Activated CD4-positive, alpha-beta memory T cell treated with anti-CD3 and anti-CD28 coated beads for 36 hours (primary cell): ENCODE measurements at regions of chr1 and their contacts with region 1.

Region 1: DNA sequence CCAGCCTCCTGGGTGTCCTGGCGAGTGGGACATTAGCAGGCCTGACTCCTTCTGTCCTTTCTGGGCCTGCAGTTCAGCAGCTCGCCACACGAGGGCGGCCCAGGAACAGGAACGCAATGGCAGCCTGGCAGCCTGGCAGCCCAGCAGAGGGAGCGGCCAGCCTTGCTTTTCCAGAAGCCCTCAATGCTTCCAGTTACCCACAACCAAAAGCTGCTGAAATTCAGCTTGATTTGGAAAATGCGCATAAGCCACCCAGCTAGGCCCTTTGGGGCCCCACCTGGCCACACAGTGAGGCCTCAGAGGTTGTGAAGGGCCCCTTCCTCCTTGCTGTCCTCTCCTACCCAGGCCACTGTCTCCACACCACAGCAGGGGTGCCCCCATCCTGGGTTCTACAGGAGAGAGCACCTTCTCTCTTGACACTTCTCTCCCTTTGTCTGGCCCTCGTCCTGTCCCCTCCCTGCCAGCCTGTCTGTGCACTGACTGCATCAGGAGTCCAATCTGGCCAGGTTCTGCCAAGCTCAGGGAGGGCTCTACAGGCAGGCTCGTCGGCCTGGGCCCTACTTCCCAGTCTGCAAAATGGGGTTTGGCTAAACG is 103.4 kb upstream of the VAMP3 start:
- DNase-seq: peak; percentile 87
- H3K4me3 Mint-ChIP-seq: no peak overlapping the region
- H3K27ac Mint-ChIP-seq: no peak overlapping the region
- H3K4me1 Mint-ChIP-seq: no peaks in the 10 kb centered on the region
- H3K27me3 Mint-ChIP-seq: peaks cover 5% of the 10 kb centered on the region

Region 2: DNA sequence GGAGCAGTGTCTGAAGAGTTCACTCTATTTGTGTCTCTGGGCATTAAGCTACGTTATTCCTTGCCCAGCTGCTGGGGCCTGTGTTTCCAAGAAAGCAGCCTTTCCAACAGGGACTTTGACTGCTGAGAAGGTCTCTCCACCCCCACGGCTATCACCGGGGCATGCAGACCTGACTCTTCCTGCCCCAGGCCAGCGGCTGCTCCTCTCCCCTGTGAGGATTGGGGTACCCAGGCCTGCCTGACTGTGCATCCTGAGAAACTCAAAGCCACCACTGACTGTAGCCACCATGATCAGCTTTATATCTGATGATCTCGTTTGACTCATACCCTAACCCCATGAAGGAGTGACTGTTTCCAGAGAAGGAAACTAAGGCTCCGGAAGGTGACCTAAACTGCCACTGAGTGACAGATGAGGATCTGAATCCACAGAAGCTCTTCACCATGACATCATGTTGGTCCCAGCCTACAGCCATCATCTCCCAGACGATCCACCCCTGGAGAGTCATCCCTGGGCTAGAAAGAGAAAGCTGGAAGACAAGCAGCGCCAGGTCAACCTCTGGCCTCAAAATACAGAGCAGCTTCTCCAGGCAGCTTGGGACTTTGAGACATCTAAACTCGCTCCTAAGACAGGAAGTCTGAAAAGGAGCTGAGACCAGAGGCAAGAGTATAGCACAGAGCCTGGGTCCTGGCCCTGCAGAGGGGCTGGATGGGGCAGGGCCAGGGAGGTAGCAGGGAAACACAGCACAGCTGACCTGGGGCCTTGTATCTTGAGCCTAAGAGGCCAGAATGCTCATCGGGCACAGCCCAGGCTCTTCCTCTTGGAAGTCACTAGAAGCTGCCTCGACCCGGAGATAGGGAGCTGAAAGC is 140.6 kb before region 1 on chr1:
- CTCF ChIA-PET with region 1: no interaction called
- POLR2A ChIA-PET with region 1: no interaction called
- intact Hi-C with region 1: no loop called
- DNase-seq: peak; percentile 25
- H3K4me3 Mint-ChIP-seq: no peak overlapping the region
- H3K27ac Mint-ChIP-seq: peak overlapping the region; percentile 18
- H3K4me1 Mint-ChIP-seq: no peaks in the 10 kb centered on the region
- H3K27me3 Mint-ChIP-seq: peaks cover 13% of the 10 kb centered on the region

Region 3: GRCh38 chr1:7552402-7552801 is 115.3 kb before region 1 on chr1:
- CTCF ChIA-PET with region 1: no interaction called
- POLR2A ChIA-PET with region 1: no interaction called
- intact Hi-C with region 1: no loop called
- DNase-seq: no peak
- H3K4me3 Mint-ChIP-seq: no peak overlapping the region
- H3K27ac Mint-ChIP-seq: no peak overlapping the region
- H3K4me1 Mint-ChIP-seq: peaks cover 12% of the 10 kb centered on the region
- H3K27me3 Mint-ChIP-seq: peaks cover 15% of the 10 kb centered on the region

Region 4: DNA sequence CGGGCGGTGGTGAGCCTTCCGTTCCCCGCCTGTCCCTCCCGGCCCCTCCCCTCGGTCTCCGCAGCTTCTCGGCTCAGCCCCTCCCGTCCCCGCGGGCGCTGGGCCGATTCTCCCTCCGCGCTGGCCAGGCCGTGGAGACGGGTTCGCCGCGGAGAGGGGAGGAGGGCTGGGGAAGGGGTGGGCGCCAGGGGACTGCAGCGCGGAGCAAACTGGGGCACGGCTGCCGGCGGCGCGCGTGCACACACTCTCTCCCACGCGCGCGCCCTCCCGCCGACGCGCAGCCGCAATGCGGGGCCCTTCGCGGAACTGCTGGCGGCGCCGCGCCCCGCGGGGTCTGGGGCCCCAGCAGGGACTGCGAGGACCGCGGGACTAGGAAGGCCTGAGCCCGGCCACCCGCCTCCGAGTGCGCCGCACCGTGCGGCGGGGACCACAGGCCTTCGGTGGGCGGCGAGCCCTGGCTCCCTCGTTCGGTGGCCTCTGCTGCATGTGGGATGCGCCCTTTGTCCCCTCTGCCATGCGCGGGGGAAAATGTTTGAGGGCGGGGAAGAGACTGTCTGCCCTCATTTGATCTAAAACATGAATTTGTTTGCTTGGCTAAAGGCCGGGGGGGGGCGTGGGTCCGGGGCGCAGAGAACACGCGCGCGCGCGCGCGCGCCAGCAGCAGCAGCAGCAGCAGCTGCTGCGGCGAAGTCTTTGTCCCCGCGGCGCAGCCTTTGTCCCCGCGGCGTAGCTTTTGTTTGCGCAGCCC is 12.7 kb after region 1 on chr1:
- CTCF ChIA-PET with region 1: interaction called, 70 read pairs
- POLR2A ChIA-PET with region 1: no interaction called
- intact Hi-C with region 1: no loop called
- DNase-seq: peak; percentile 35
- H3K4me3 Mint-ChIP-seq: peak overlapping the region; percentile 68
- H3K27ac Mint-ChIP-seq: no peak overlapping the region
- H3K4me1 Mint-ChIP-seq: no peaks in the 10 kb centered on the region
- H3K27me3 Mint-ChIP-seq: peaks cover 3% of the 10 kb centered on the region

Region 5: GRCh38 chr1:7694600-7695496 is 27.1 kb after region 1 on chr1:
- CTCF ChIA-PET with region 1: interaction called, 21 read pairs
- POLR2A ChIA-PET with region 1: no interaction called
- intact Hi-C with region 1: no loop called
- DNase-seq: no peak
- H3K4me3 Mint-ChIP-seq: no peak overlapping the region
- H3K27ac Mint-ChIP-seq: no peak overlapping the region
- H3K4me1 Mint-ChIP-seq: peaks cover 4% of the 10 kb centered on the region
- H3K27me3 Mint-ChIP-seq: peaks cover 5% of the 10 kb centered on the region

Region 6: GRCh38 chr1:7704214-7705047 is 36.7 kb after region 1 on chr1:
- CTCF ChIA-PET with region 1: interaction called, 13 read pairs
- POLR2A ChIA-PET with region 1: no interaction called
- intact Hi-C with region 1: no loop called
- DNase-seq: peak; percentile 94
- H3K4me3 Mint-ChIP-seq: peak overlapping the region; percentile 56
- H3K27ac Mint-ChIP-seq: no peak overlapping the region
- H3K4me1 Mint-ChIP-seq: peaks cover 9% of the 10 kb centered on the region
- H3K27me3 Mint-ChIP-seq: peaks cover 37% of the 10 kb centered on the region

Region 7: GRCh38 chr1:7743346-7743745 is 75.6 kb after region 1 on chr1:
- CTCF ChIA-PET with region 1: interaction called, 506 read pairs
- POLR2A ChIA-PET with region 1: no interaction called
- intact Hi-C with region 1: no loop called
- DNase-seq: no peak
- H3K4me3 Mint-ChIP-seq: no peak overlapping the region
- H3K27ac Mint-ChIP-seq: no peak overlapping the region
- H3K4me1 Mint-ChIP-seq: no peaks in the 10 kb centered on the region
- H3K27me3 Mint-ChIP-seq: no peaks in the 10 kb centered on the region

Region 8: GRCh38 chr1:7760245-7760644 is 92.5 kb after region 1 on chr1:
- CTCF ChIA-PET with region 1: interaction called, 506 read pairs
- POLR2A ChIA-PET with region 1: no interaction called
- intact Hi-C with region 1: no loop called
- DNase-seq: no peak
- H3K4me3 Mint-ChIP-seq: no peak overlapping the region
- H3K27ac Mint-ChIP-seq: no peak overlapping the region
- H3K4me1 Mint-ChIP-seq: no peaks in the 10 kb centered on the region
- H3K27me3 Mint-ChIP-seq: peaks cover 10% of the 10 kb centered on the region

Region 9: GRCh38 chr1:7902478-7903085 is 234.9 kb after region 1 on chr1:
- CTCF ChIA-PET with region 1: interaction called, 16 read pairs
- POLR2A ChIA-PET with region 1: no interaction called
- intact Hi-C with region 1: loop called (anchors 1 kb)
- DNase-seq: peak; percentile 72
- H3K4me3 Mint-ChIP-seq: peak overlapping the region; percentile 37
- H3K27ac Mint-ChIP-seq: no peak overlapping the region
- H3K4me1 Mint-ChIP-seq: peaks cover 10% of the 10 kb centered on the region
- H3K27me3 Mint-ChIP-seq: no peaks in the 10 kb centered on the region